GM12878 (cell line): ENCODE measurements at regions of chr11 and their contacts with region 1.

Region 1: DNA sequence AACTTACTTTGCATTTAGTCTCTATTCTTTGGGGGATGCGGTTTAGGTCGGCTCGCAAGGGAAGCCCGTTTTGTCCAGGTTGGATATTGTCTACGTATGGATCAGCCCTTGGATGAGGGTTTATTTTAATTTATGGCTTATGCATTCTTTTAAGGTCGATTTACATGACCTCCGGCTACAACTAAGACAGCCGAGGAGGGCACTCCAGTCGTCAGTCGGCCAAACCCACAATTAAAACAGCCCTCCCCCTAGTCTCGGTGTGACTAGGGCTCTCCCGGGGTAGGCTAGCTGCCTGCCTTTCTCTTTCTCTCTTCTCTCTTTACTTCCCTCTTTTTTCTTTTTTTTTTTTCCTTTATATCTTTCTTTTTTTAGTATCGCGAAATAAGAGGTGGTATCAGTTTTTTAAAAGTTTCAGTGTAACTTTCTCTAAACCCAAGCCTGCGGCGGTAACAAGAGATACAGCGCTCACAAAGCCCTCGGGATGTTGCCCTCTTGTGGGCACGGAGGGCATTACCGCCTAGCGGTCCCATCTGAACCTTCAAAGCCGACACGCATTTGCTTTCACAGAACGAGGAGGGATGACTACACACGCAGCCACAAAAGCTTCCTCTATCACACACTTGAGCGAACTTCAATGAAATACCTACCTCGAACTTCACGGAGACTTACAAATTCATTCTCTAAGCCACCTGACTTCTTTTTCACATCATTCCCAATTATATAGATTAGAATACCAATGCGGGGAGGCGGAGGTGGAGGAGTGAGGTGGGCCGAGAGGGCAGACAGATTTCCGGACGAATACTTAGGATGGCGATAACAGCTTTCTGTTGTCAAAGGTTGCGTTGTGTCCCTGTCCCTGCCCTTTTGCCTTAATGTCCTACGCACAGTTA is 132.3 kb upstream of the C11orf58 start:
- DNase-seq: peak; percentile 21
- ATAC-seq: peak; percentile 97
- H3K4me3 ChIP-seq: no peak overlapping the region
- H3K27ac ChIP-seq: no peak overlapping the region
- H3K4me1 ChIP-seq: no peaks in the 10 kb centered on the region
- H3K27me3 ChIP-seq: peaks cover 20 to 52% of the 10 kb centered on the region in 2 experiments
- CTCF ChIP-seq: peak; percentile 89 to 94 (median 92)
- EP300 ChIP-seq: no peak
- POLR2A ChIP-seq: no peak
- RAD21 ChIP-seq: peak; percentile 56

Region 2: GRCh38 chr11:15770798-15771414 is 835.2 kb before region 1 on chr11:
- CTCF ChIA-PET with region 1: no interaction called
- POLR2A ChIA-PET with region 1: no interaction called
- RAD21 ChIA-PET with region 1: no interaction called
- SMC1A ChIA-PET with region 1: no interaction called
- in situ Hi-C with region 1: no loop called
- intact Hi-C with region 1: loop called (anchors 5 kb)
- DNase-seq: no peak
- ATAC-seq: peak; percentile 86
- H3K4me3 ChIP-seq: no peak overlapping the region
- H3K27ac ChIP-seq: no peak overlapping the region
- H3K4me1 ChIP-seq: no peaks in the 10 kb centered on the region
- H3K27me3 ChIP-seq: no peaks in the 10 kb centered on the region; a peak in 1 of 4 replicates
- CTCF ChIP-seq: peak; percentile 52 to 68 (median 65)
- EP300 ChIP-seq: no peak
- POLR2A ChIP-seq: no peak
- RAD21 ChIP-seq: peak; percentile 52

Region 3: DNA sequence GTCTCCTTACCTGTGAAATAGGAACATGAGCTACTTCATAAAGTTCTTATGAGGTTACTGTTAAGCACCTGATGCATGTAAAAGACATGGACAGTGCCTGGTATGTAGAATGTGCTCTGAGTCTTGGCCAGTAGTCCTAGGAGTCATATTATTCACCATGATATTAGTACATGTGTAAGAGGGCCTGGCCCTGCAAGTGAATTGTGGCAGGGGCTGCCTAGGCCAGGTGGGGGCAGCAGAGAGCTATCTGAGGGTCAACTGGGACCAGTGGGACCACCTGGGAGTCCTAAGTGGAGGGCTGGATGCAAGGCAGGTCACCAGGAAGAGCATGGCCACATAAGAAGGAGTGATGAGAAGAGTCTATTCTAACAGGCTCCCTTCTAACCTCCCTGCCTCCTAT is 779.3 kb before region 1 on chr11:
- CTCF ChIA-PET with region 1: no interaction called
- POLR2A ChIA-PET with region 1: no interaction called
- RAD21 ChIA-PET with region 1: no interaction called
- SMC1A ChIA-PET with region 1: no interaction called
- in situ Hi-C with region 1: loop called (anchors 25 kb)
- intact Hi-C with region 1: no loop called
- DNase-seq: no peak
- ATAC-seq: peak; percentile 91
- H3K4me3 ChIP-seq: no peak overlapping the region
- H3K27ac ChIP-seq: no peak overlapping the region
- H3K4me1 ChIP-seq: no peaks in the 10 kb centered on the region
- H3K27me3 ChIP-seq: no peaks in the 10 kb centered on the region
- CTCF ChIP-seq: peak; percentile 46 to 55 (median 53)
- EP300 ChIP-seq: no peak
- POLR2A ChIP-seq: no peak
- RAD21 ChIP-seq: peak; percentile 51; the same call in 1 of the 2 replicates

Region 4: DNA sequence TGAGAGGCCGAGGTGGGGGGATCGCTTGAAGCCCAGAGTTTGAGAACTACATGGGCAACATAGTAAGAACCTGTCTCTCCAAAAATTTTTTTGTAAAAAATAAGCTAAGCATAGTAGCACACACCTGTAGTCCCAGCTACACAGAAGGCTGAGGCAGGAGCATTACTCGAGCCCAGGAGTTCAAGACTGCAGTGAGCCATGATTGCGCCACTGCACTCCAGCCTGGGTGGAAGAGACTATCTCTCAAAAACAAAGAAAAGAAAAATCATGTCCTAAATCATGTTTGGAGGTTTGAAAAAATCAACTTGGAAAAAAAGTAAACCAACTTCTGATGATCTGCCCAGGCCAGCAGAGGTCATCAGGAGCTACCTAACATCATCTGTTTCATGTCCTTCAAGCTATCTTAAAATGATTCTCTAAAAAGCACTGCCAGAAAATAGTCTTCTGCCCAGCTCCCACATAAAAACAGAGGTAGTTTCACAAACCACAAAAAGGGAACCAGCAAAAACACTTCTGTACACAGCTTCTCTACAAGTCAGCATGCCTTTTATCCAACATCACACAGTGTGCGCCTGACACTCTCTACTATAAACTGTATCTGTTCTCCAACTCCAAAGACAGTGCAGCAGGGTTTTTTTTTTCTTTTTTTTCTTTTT is 414.8 kb before region 1 on chr11:
- CTCF ChIA-PET with region 1: interaction called, 3 read pairs
- POLR2A ChIA-PET with region 1: no interaction called
- RAD21 ChIA-PET with region 1: no interaction called
- SMC1A ChIA-PET with region 1: no interaction called
- in situ Hi-C with region 1: no loop called
- intact Hi-C with region 1: loop called (anchors 2 kb)
- DNase-seq: no peak
- ATAC-seq: peak; percentile 56
- H3K4me3 ChIP-seq: no peak overlapping the region
- H3K27ac ChIP-seq: no peak overlapping the region
- H3K4me1 ChIP-seq: no peaks in the 10 kb centered on the region
- H3K27me3 ChIP-seq: no peaks in the 10 kb centered on the region
- CTCF ChIP-seq: no peak; a peak in 1 of 6 replicates
- EP300 ChIP-seq: no peak
- POLR2A ChIP-seq: no peak
- RAD21 ChIP-seq: no peak

Region 5: GRCh38 chr11:16204261-16204660 is 401.9 kb before region 1 on chr11:
- CTCF ChIA-PET with region 1: no interaction called
- POLR2A ChIA-PET with region 1: no interaction called
- RAD21 ChIA-PET with region 1: no interaction called
- SMC1A ChIA-PET with region 1: no interaction called
- in situ Hi-C with region 1: no loop called
- intact Hi-C with region 1: no loop called
- DNase-seq: no peak
- ATAC-seq: no peak
- H3K4me3 ChIP-seq: no peak overlapping the region
- H3K27ac ChIP-seq: no peak overlapping the region
- H3K4me1 ChIP-seq: no peaks in the 10 kb centered on the region
- H3K27me3 ChIP-seq: no peaks in the 10 kb centered on the region
- CTCF ChIP-seq: no peak
- EP300 ChIP-seq: no peak
- POLR2A ChIP-seq: no peak
- RAD21 ChIP-seq: no peak

Region 6: GRCh38 chr11:16841984-16842383 is 235.8 kb after region 1 on chr11:
- CTCF ChIA-PET with region 1: no interaction called
- POLR2A ChIA-PET with region 1: no interaction called
- RAD21 ChIA-PET with region 1: no interaction called
- SMC1A ChIA-PET with region 1: no interaction called
- in situ Hi-C with region 1: no loop called
- intact Hi-C with region 1: no loop called
- DNase-seq: no peak
- ATAC-seq: no peak
- H3K4me3 ChIP-seq: no peak overlapping the region
- H3K27ac ChIP-seq: no peak overlapping the region
- H3K4me1 ChIP-seq: no peaks in the 10 kb centered on the region
- H3K27me3 ChIP-seq: no peaks in the 10 kb centered on the region
- CTCF ChIP-seq: no peak
- EP300 ChIP-seq: no peak
- POLR2A ChIP-seq: no peak
- RAD21 ChIP-seq: no peak